ENCODE measurements at regions of chr6 and their contacts with region 1.

Region 1: GRCh38 chr6:131116749-131117360 is 18.4 kb upstream of the AKAP7 start:
- DNase-seq: peak in 1 of 2 experiments; percentile 52
- H3K4me3 ChIP-seq: no peak overlapping the region
- H3K27ac ChIP-seq: no peak overlapping the region
- H3K4me1 ChIP-seq: no peaks in the 10 kb centered on the region
- H3K27me3 ChIP-seq: no peaks in the 10 kb centered on the region
- CTCF ChIP-seq: peak; percentile 90

Region 2: GRCh38 chr6:130697995-130698535 is 418.8 kb before region 1 on chr6:
- CTCF ChIA-PET with region 1: no interaction called
- POLR2A ChIA-PET with region 1: no interaction called
- intact Hi-C with region 1: loop called (anchors 5 kb)
- DNase-seq: peak in 1 of 2 experiments; percentile 34
- H3K4me3 ChIP-seq: no peak overlapping the region
- H3K27ac ChIP-seq: no peak overlapping the region
- H3K4me1 ChIP-seq: no peaks in the 10 kb centered on the region
- H3K27me3 ChIP-seq: peaks cover 8% of the 10 kb centered on the region; the same call in 1 of the 2 replicates
- CTCF ChIP-seq: peak; percentile 91

Region 3: DNA sequence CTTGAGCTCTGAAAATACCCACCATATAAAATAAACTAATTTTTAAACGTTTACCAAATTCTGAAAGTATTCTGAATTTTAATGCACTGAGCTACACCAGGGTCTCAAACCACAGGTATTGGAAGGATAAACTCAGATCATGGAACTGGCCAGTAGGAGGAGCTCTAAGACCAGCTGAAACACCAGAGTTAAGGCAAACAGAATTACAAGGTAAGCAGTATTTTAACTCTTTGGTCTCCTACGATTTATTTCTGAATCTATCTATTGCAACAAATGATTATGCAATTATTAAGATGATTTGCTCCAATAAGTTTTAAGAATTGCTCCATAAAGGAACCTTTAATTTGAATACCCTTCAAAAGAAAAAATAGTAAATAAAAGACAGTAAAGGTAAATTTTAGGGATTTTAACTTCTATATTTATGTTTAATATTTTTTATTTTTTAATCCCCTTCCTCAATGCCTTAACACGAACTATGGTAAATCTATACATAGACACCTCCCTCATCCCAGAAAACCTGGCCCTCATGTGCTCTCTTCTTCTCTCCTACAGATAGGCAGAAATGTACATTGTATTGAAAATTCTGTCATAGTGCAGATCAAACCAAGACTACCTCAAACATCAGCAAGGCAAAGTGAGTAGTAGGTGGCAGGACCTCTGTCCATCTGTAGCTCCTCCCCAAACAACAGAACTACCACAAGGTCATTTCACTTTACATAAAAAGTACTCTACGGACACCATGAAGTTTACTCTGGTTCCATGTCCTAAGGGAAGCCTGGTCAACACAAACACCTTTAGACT is 231.3 kb before region 1 on chr6:
- CTCF ChIA-PET with region 1: interaction called, 4 read pairs
- POLR2A ChIA-PET with region 1: interaction called, 5 read pairs
- intact Hi-C with region 1: loop called (anchors 1 kb)
- DNase-seq: peak; percentile 61 to 67
- H3K4me3 ChIP-seq: no peak overlapping the region
- H3K27ac ChIP-seq: no peak overlapping the region
- H3K4me1 ChIP-seq: no peaks in the 10 kb centered on the region
- H3K27me3 ChIP-seq: no peaks in the 10 kb centered on the region
- CTCF ChIP-seq: peak; percentile 98

Measured in PC-9 (cell line).